Posterior vena cava (tissue), 2 donors: ENCODE measurements at regions of chr1 and their contacts with region 1.

Region 1: GRCh38 chr1:41338820-41339219 is 22.4 kb upstream of the FOXO6 start:
- DNase-seq: no peak

Region 2: DNA sequence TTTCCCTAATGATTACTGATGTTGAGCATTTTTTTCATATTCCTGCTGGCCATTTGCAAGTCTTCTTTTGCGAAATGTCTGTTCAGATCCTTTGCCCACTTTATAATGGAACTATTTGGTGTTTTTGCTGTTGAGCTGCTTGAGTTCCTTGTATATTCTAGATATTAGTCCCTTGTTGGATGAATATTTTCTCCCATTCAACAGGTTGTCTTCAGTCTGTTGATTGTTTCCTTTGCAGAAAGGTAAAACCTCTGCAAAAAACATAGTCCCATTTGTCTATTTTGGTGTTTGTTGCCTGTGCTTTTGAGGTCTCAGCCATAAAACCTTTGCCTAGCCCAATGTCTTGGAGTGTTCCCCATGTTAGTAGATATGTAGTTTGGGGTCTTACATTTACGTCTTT is 736.4 kb after region 1 on chr1:
- intact Hi-C with region 1: loop called in 1 of 2 experiments (anchors 5 kb)
- DNase-seq: no peak